Caco-2 (cell line): ENCODE measurements at regions of chr13 and their contacts with region 1.

Region 1: DNA sequence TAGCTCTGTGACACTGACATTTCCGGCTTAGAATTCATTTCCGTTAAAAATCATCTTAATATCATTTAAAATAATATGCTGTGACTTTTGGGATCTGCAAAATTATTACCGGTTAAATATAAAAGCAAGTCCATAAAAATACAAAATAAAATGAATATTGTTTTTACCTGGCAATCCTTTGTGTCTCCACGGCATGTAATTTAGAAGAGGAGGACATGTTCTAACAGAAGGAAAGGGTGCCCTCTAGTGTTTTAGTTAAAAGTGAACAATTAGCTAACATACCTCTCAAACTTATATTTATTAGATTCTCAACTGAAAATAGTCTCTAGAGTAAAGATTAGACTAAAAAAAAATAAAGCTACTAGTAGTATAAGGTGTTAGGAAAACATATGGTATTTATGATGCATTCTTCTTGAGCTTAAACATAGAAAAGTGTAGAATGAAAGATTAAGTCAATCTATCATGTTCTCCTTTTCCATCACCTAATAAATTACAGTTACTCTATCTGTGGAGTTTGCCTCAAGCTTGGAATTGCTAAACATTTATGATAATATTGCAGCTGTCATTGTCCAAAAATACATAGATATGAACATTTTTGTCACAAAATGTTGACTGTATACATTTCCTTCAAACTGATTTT is 676.7 kb upstream of the SPRY2 start:
- DNase-seq: peak in 1 of 2 experiments; percentile 30
- H3K4me3 ChIP-seq: no peak overlapping the region
- H3K4me3 Mint-ChIP-seq: no peak overlapping the region
- H3K27ac Mint-ChIP-seq: no peak overlapping the region
- H3K4me1 ChIP-seq: no peaks in the 10 kb centered on the region
- H3K4me1 Mint-ChIP-seq: no peaks in the 10 kb centered on the region
- H3K27me3 ChIP-seq: no peaks in the 10 kb centered on the region
- H3K27me3 Mint-ChIP-seq: no peaks in the 10 kb centered on the region
- CTCF ChIP-seq: peak; percentile 44 to 57

Region 2: GRCh38 chr13:79571147-79571546 is 1446.5 kb before region 1 on chr13:
- CTCF ChIA-PET with region 1: no interaction called
- POLR2A ChIA-PET with region 1: no interaction called
- intact Hi-C with region 1: loop called (anchors 10 kb)
- DNase-seq: no peak
- H3K4me3 ChIP-seq: no peak overlapping the region
- H3K4me3 Mint-ChIP-seq: no peak overlapping the region
- H3K27ac Mint-ChIP-seq: no peak overlapping the region
- H3K4me1 ChIP-seq: no peaks in the 10 kb centered on the region
- H3K4me1 Mint-ChIP-seq: no peaks in the 10 kb centered on the region
- H3K27me3 ChIP-seq: no peaks in the 10 kb centered on the region
- H3K27me3 Mint-ChIP-seq: peaks cover 5% of the 10 kb centered on the region
- CTCF ChIP-seq: no peak

Region 3: DNA sequence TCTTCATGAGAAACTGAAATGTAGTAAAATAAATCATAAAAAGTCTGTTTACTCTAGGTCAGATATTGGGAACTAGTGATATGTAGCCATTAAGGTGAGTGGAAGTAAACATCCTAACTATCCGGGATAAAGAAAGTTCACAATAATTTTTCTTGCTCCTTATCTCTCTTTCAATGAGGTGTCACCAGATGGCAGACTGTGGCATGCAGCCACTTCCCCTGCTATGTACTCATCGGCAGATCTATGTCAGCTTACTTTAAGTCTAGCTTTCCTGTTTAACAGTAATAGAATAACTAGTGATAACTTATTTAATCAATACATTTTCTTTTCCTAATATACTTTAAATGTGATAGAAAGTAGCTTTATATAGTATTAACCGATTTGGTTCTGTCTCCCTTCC is 1354.8 kb before region 1 on chr13:
- CTCF ChIA-PET with region 1: no interaction called
- POLR2A ChIA-PET with region 1: no interaction called
- intact Hi-C with region 1: loop called (anchors 1 kb)
- DNase-seq: no peak
- H3K4me3 ChIP-seq: no peak overlapping the region
- H3K4me3 Mint-ChIP-seq: no peak overlapping the region
- H3K27ac Mint-ChIP-seq: no peak overlapping the region
- H3K4me1 ChIP-seq: no peaks in the 10 kb centered on the region
- H3K4me1 Mint-ChIP-seq: peaks cover 11% of the 10 kb centered on the region
- H3K27me3 ChIP-seq: no peaks in the 10 kb centered on the region
- H3K27me3 Mint-ChIP-seq: peaks cover 3% of the 10 kb centered on the region
- CTCF ChIP-seq: peak in 1 of 2 experiments; percentile 19

Region 4: DNA sequence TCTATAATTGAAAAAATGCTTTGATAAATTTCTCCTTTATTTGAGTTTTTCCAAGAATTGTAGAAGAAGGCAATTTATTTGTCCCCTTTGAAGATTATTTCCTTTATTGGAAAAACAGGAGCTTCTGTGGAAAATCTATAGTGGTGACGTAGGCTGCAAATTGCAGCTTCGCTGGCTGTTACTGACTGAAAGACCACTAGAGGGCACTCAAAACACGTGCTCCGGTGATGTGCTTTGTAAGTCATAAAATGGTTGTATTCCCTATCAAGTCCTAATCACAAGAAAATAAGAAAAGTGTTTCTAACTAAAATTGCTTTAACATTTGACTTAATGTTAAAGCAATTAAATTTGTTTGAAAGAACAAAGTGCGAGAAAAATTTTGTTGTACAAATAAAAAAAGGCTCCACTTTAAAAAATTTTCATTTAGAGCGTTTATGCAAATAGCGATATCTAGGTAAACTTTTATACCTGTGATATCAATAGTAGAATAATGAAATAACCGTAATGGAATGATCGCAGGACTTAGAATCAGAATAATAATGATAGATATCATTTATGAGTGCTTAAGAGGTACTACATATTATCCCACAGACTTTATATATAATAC is 38.5 kb before region 1 on chr13:
- CTCF ChIA-PET with region 1: interaction called, 13 read pairs
- POLR2A ChIA-PET with region 1: no interaction called
- intact Hi-C with region 1: loop called (anchors 1 kb)
- DNase-seq: peak; percentile 67 to 69
- H3K4me3 ChIP-seq: no peak overlapping the region
- H3K4me3 Mint-ChIP-seq: no peak overlapping the region
- H3K27ac Mint-ChIP-seq: no peak overlapping the region
- H3K4me1 ChIP-seq: peaks cover 8% of the 10 kb centered on the region
- H3K4me1 Mint-ChIP-seq: no peaks in the 10 kb centered on the region
- H3K27me3 ChIP-seq: no peaks in the 10 kb centered on the region
- H3K27me3 Mint-ChIP-seq: no peaks in the 10 kb centered on the region
- CTCF ChIP-seq: peak; percentile 89 to 90

Region 5: DNA sequence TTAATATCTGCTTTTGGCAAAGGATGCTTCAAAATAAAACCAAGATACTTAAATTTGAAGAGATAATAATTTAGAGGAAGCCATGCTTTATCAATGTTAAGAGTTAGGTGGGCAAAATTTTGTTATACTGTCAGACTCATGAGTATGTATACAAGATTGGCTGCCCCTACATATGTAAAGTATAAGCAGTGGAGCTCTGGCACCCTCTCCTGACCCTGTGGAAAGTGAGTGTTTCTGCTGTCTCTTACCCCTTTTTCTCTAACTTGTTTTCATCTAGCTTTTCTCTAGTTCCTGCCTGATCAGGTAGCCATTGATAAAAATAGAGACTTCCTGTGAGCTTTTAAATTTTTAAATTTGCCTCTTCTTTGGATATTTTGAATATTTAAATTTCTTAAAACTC is 34.2 kb after region 1 on chr13:
- CTCF ChIA-PET with region 1: no interaction called
- POLR2A ChIA-PET with region 1: no interaction called
- intact Hi-C with region 1: loop called (anchors 1 kb)
- DNase-seq: no peak
- H3K4me3 ChIP-seq: no peak overlapping the region
- H3K4me3 Mint-ChIP-seq: no peak overlapping the region
- H3K27ac Mint-ChIP-seq: no peak overlapping the region
- H3K4me1 ChIP-seq: no peaks in the 10 kb centered on the region
- H3K4me1 Mint-ChIP-seq: no peaks in the 10 kb centered on the region
- H3K27me3 ChIP-seq: no peaks in the 10 kb centered on the region
- H3K27me3 Mint-ChIP-seq: no peaks in the 10 kb centered on the region
- CTCF ChIP-seq: peak in 1 of 2 experiments; percentile 30